Ovary (tissue), 10 donors: ENCODE measurements at regions of chr15 and their contacts with region 1.

Region 1: GRCh38 chr15:94478763-94479162 is 247.4 kb downstream of the MCTP2 start:
- DNase-seq: no peak
- H3K4me3 ChIP-seq: no peak overlapping the region
- H3K27ac ChIP-seq: no peak overlapping the region
- H3K4me1 ChIP-seq: no peaks in the 10 kb centered on the region
- H3K27me3 ChIP-seq: no peaks in the 10 kb centered on the region
- CTCF ChIP-seq: no peak
- EP300 ChIP-seq: no peak
- POLR2A ChIP-seq: no peak

Region 2: DNA sequence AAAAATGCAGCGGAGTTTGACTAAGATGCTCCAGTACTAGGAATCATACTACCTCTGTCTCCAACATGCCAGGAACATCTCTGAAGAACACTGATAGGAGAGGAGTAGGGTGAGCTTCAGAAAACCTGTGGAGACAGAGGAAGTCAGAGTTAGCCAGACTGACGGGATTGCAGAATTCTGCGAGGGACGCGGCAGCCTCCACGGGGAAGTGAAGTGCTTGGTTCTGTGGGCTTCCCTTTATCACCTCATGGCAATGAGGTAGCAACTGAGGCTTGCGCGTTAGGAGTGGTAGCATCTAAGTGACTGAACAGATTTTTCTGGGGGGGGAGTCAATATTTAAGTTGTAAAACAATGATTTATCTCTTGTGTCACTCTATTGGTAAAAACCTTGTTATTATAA is 21.1 kb before region 1 on chr15:
- intact Hi-C with region 1: loop called in 1 of 4 experiments (anchors 2 kb)
- DNase-seq: no peak
- H3K4me3 ChIP-seq: no peak overlapping the region
- H3K27ac ChIP-seq: no peak overlapping the region
- H3K4me1 ChIP-seq: no peaks in the 10 kb centered on the region
- H3K27me3 ChIP-seq: no peaks in the 10 kb centered on the region
- CTCF ChIP-seq: no peak
- EP300 ChIP-seq: no peak
- POLR2A ChIP-seq: no peak